HCT116 (cell line): ENCODE measurements at regions of chr11 and their contacts with region 1.

Region 1: GRCh38 chr11:96925862-96926261 is 536.0 kb downstream of the JRKL start:
- DNase-seq: no peak
- ATAC-seq: no peak
- H3K4me3 ChIP-seq: no peak overlapping the region
- H3K27ac ChIP-seq: no peak overlapping the region
- H3K4me1 ChIP-seq: no peaks in the 10 kb centered on the region
- H3K27me3 ChIP-seq: no peaks in the 10 kb centered on the region
- CTCF ChIP-seq: no peak
- POLR2A ChIP-seq: no peak
- RAD21 ChIP-seq: no peak

Region 2: GRCh38 chr11:96969251-96969650 is 43.4 kb after region 1 on chr11:
- CTCF ChIA-PET with region 1: no interaction called
- POLR2A ChIA-PET with region 1: no interaction called
- RAD21 ChIA-PET with region 1: no interaction called
- intact Hi-C with region 1: loop called (anchors 1 kb)
- DNase-seq: no peak
- ATAC-seq: no peak
- H3K4me3 ChIP-seq: no peak overlapping the region
- H3K27ac ChIP-seq: no peak overlapping the region
- H3K4me1 ChIP-seq: no peaks in the 10 kb centered on the region
- H3K27me3 ChIP-seq: no peaks in the 10 kb centered on the region
- CTCF ChIP-seq: no peak
- POLR2A ChIP-seq: no peak
- RAD21 ChIP-seq: no peak

Region 3: GRCh38 chr11:97069160-97069559 is 143.3 kb after region 1 on chr11:
- CTCF ChIA-PET with region 1: no interaction called
- POLR2A ChIA-PET with region 1: no interaction called
- RAD21 ChIA-PET with region 1: no interaction called
- intact Hi-C with region 1: no loop called
- DNase-seq: no peak
- ATAC-seq: no peak
- H3K4me3 ChIP-seq: no peak overlapping the region
- H3K27ac ChIP-seq: no peak overlapping the region
- H3K4me1 ChIP-seq: no peaks in the 10 kb centered on the region
- H3K27me3 ChIP-seq: no peaks in the 10 kb centered on the region
- CTCF ChIP-seq: no peak
- POLR2A ChIP-seq: no peak
- RAD21 ChIP-seq: no peak